Caco-2 (cell line): ENCODE measurements at regions of chr1 and their contacts with region 1.

Region 1: DNA sequence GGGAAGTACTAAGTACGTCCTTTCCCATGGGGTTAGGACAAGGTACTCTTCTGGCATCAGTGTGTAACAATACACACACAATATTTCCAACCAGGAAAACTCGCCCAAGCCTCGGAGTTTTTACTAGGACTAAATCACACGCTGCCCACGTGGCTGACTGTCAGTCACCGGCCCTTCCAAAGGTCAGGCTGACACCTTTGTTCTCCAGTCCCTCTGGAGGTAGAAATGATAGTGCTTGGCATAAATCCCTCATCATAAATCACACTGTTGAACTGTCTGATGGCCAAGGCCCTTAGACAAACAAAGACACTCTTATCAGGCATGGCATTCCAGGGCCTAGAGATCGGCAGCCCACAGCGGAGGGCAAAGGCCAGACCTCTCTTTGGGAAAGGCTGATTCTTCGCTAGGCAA is 16.9 kb upstream of the SLAMF9 start:
- DNase-seq: peak; percentile 92 to 95
- H3K4me3 ChIP-seq: no peak overlapping the region
- H3K4me3 Mint-ChIP-seq: peak overlapping the region; percentile 12
- H3K27ac Mint-ChIP-seq: peak overlapping the region; percentile 83
- H3K4me1 ChIP-seq: peaks cover 44% of the 10 kb centered on the region
- H3K4me1 Mint-ChIP-seq: peaks cover 20% of the 10 kb centered on the region
- H3K27me3 ChIP-seq: no peaks in the 10 kb centered on the region
- H3K27me3 Mint-ChIP-seq: no peaks in the 10 kb centered on the region
- CTCF ChIP-seq: peak; percentile 9 to 29

Region 2: DNA sequence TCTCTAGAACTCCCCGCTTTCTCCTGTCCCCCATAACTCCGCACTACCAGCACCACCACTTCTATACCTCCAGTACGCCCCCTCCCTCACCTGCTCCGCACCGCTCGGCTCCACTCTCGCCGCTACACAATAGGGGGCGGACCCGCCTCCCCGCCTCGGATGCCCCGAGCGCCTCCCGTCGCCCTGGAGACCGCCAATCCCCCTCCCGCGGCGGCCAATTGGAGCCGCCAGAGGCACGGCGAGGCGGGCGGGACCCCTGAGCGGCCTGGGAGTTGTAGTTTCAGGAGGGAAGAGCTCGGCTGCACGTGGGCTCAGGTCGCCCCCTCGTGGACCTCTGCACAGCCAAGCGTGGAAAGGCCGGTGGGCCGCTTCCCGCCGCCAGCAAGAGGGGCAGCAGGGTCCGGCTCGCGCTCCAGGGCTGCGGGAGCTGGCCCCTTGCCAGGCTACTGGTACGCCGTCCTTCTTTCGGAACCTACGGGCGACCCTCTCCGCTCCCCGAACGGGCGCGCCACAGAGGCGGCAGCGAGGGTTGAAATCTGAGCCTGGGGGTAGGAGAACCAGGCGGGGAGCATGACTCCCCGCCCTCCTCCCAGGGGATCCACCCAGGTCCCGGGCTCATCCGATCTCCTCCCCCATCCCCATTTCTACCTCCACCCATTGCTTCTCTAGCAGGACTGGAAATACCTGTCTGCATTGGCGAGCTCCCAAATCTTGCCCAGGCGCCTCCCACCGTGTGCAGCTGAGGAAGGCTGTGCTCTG is 25.3 kb before region 1 on chr1 and contains the start of gene IGSF9:
- CTCF ChIA-PET with region 1: interaction called, 6 read pairs
- POLR2A ChIA-PET with region 1: no interaction called
- intact Hi-C with region 1: loop called (anchors 1 kb)
- DNase-seq: peak; percentile 95 to 97
- H3K4me3 ChIP-seq: peak within 1 kb of the TSS; percentile 50
- H3K4me3 Mint-ChIP-seq: peak within 1 kb of the TSS; percentile 83
- H3K27ac Mint-ChIP-seq: peak within 1 kb of the TSS; percentile 68
- H3K4me1 ChIP-seq: peaks cover 56% of the 10 kb centered on the region
- H3K4me1 Mint-ChIP-seq: peaks cover 61% of the 10 kb centered on the region
- H3K27me3 ChIP-seq: no peaks in the 10 kb centered on the region
- H3K27me3 Mint-ChIP-seq: no peaks in the 10 kb centered on the region
- CTCF ChIP-seq: peak; percentile 74 to 80
- total RNA-seq, gene IGSF9: 19.6 and 21.2 TPM in 2 replicates

Region 3: DNA sequence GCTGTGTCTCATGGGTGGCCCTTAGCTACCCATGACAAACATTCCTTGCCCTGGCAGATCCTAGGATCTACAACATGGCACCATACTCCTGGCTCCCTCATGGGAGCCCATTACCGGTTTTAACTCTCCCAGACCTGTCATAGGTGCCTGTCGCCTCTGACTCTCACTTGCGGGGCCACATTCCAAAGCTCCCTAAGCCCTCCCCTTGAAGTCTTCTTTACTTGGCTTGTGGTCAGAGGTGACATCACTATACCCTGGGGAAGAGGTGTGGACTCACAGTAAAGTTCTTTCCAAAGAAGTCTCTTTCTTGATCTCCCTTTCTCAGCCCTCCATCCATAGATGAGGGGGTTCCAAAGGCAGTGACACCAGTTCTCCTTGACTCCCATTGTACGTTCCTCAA is 11.5 kb before region 1 on chr1:
- CTCF ChIA-PET with region 1: no interaction called
- POLR2A ChIA-PET with region 1: no interaction called
- intact Hi-C with region 1: loop called (anchors 1 kb)
- DNase-seq: peak; percentile 79 to 81
- H3K4me3 ChIP-seq: no peak overlapping the region
- H3K4me3 Mint-ChIP-seq: peak overlapping the region; percentile 27
- H3K27ac Mint-ChIP-seq: peak overlapping the region; percentile 93
- H3K4me1 ChIP-seq: peaks cover 41% of the 10 kb centered on the region
- H3K4me1 Mint-ChIP-seq: peaks cover 36% of the 10 kb centered on the region
- H3K27me3 ChIP-seq: no peaks in the 10 kb centered on the region
- H3K27me3 Mint-ChIP-seq: no peaks in the 10 kb centered on the region
- CTCF ChIP-seq: no peak

Region 4: DNA sequence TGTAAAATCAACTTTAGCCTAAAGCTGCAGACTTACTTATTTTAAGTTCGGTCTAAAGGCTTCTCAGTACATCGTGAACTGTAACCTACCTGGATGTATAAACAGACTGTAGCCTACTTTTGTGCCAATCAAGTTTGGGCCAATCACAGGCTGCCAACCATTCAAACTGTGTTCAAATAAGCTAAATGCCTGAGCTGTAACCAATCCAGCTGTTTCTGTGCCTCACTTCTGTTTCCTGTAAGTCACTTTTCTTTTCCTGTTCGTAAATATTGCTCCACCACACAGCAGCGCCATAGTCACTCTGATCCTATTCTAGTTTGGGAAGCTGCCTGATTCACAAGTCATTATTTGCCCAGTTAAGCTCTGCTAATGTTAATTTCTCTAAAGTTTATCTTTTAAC is 20.6 kb after region 1 on chr1:
- CTCF ChIA-PET with region 1: interaction called, 3 read pairs
- POLR2A ChIA-PET with region 1: no interaction called
- intact Hi-C with region 1: loop called (anchors 1 kb)
- DNase-seq: peak; percentile 49 to 63
- H3K4me3 ChIP-seq: no peak overlapping the region
- H3K4me3 Mint-ChIP-seq: peak overlapping the region; percentile 52
- H3K27ac Mint-ChIP-seq: peak overlapping the region; percentile 45
- H3K4me1 ChIP-seq: peaks cover 14% of the 10 kb centered on the region
- H3K4me1 Mint-ChIP-seq: peaks cover 8% of the 10 kb centered on the region
- H3K27me3 ChIP-seq: no peaks in the 10 kb centered on the region
- H3K27me3 Mint-ChIP-seq: no peaks in the 10 kb centered on the region
- CTCF ChIP-seq: no peak